Left colon (tissue), 2 donors: ENCODE measurements at regions of chr6 and their contacts with region 1.

Region 1: GRCh38 chr6:7238900-7239589 is 74.0 kb downstream of the SSR1 start:
- DNase-seq: peak; percentile 93 to 97
- ATAC-seq: peak; percentile 65

Region 2: GRCh38 chr6:6676910-6677441 is 562.1 kb before region 1 on chr6:
- intact Hi-C with region 1: loop called in 1 of 2 experiments (anchors 5 kb)
- DNase-seq: peak; percentile 69 to 85
- ATAC-seq: peak; percentile 64

Region 3: GRCh38 chr6:6724539-6725467 is 514.2 kb before region 1 on chr6:
- intact Hi-C with region 1: loop called in 1 of 2 experiments (anchors 5 kb)
- DNase-seq: peak; percentile 75 to 87
- ATAC-seq: peak; percentile 78